MCF 10A (cell line): ENCODE measurements at regions of chr7 and their contacts with region 1.

Region 1: DNA sequence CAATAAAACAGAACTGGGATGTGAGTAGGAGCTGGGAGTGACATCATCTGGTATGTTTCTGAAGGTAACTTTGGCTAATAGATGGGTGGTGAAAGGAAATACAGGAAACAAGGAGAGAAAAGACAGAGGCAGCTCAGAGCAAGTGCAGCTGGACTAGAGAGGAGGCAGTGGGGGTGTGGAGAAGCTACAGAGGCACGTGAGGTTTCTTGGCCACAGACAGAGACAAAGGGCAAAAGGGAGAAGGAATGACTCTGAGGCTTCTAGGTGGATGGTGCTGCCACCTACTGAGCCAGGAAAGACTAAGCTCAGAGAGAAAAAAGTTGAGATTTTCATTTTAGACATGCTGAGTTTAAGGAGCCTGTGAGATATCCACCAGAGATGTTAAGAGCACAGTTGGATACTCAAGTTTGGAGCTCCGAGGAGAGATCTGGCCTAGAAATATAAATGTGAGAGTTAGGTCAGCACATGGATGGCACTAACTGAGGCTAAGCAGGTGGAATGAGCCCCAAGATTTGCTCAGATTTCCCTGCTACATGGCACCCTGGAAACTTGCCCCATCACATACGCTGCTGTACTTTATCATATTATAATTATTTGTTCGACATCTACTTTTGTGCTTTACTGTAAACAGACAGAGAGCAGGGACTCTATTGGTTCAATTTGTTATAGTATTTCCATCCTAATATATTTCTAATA is 293.0 kb upstream of the IMMP2L start:
- DNase-seq: peak; percentile 68
- H3K4me3 Mint-ChIP-seq: no peak overlapping the region
- H3K27ac Mint-ChIP-seq: no peak overlapping the region
- H3K4me1 Mint-ChIP-seq: peaks cover 9% of the 10 kb centered on the region
- H3K27me3 Mint-ChIP-seq: no peaks in the 10 kb centered on the region
- CTCF ChIP-seq: peak; percentile 43

Region 2: GRCh38 chr7:111752022-111752582 is 103.2 kb before region 1 on chr7:
- CTCF ChIA-PET with region 1: interaction called, 286 read pairs
- POLR2A ChIA-PET with region 1: interaction called, 5 read pairs
- intact Hi-C with region 1: loop called (anchors 1 kb)
- DNase-seq: peak; percentile 75
- H3K4me3 Mint-ChIP-seq: no peak overlapping the region
- H3K27ac Mint-ChIP-seq: no peak overlapping the region
- H3K4me1 Mint-ChIP-seq: peaks cover 6% of the 10 kb centered on the region
- H3K27me3 Mint-ChIP-seq: no peaks in the 10 kb centered on the region
- CTCF ChIP-seq: peak; percentile 81

Region 3: DNA sequence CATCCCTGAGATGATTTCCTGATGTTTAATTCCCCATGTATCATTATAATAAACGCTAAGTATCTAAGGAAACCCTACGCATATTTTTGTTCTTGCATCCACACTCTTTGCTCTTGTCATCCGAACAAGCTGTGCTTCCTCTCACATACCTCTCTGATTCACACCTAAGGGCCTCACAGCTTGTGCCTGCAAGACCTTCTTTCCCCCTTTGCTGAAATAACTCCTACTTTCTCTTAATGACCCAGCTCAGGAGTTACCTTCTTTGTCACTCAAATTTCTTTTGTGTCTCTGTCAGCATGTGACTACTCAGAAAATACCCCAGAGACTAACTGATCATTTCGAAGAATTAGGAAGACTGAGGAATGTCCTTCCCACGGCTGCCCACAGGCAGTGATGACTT is 83.7 kb before region 1 on chr7:
- CTCF ChIA-PET with region 1: interaction called, 43 read pairs
- POLR2A ChIA-PET with region 1: interaction called, 4 read pairs
- intact Hi-C with region 1: no loop called
- DNase-seq: no peak
- H3K4me3 Mint-ChIP-seq: no peak overlapping the region
- H3K27ac Mint-ChIP-seq: no peak overlapping the region
- H3K4me1 Mint-ChIP-seq: no peaks in the 10 kb centered on the region
- H3K27me3 Mint-ChIP-seq: no peaks in the 10 kb centered on the region
- CTCF ChIP-seq: no peak

Region 4: DNA sequence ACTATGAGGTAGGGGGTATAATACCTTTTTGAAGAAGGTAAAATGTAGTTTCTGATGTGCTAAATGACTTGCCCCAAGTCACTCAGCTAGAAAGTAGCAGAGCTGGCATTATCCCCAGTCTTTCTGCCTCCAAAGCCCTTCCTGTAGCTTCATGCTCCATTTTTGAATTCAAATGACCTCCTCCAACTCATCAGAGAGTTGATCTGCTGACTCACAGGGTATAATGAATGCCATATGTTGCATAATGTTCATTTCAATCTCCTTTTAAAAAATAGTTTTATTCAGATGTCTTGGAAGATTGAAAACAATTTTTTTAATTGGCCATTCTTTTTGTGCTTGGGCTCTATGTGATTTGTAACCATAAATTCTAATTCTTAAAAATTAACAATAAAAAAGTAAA is 20.2 kb before region 1 on chr7:
- CTCF ChIA-PET with region 1: interaction called, 24 read pairs
- POLR2A ChIA-PET with region 1: no interaction called
- intact Hi-C with region 1: no loop called
- DNase-seq: peak; percentile 66
- H3K4me3 Mint-ChIP-seq: no peak overlapping the region
- H3K27ac Mint-ChIP-seq: peak overlapping the region; percentile 14
- H3K4me1 Mint-ChIP-seq: peaks cover 17% of the 10 kb centered on the region
- H3K27me3 Mint-ChIP-seq: no peaks in the 10 kb centered on the region
- CTCF ChIP-seq: no peak

Region 5: GRCh38 chr7:111867348-111867931 is 12.1 kb after region 1 on chr7:
- CTCF ChIA-PET with region 1: interaction called, 38 read pairs
- POLR2A ChIA-PET with region 1: interaction called, 3 read pairs
- intact Hi-C with region 1: no loop called
- DNase-seq: no peak
- H3K4me3 Mint-ChIP-seq: no peak overlapping the region
- H3K27ac Mint-ChIP-seq: no peak overlapping the region
- H3K4me1 Mint-ChIP-seq: peaks cover 7% of the 10 kb centered on the region
- H3K27me3 Mint-ChIP-seq: no peaks in the 10 kb centered on the region
- CTCF ChIP-seq: no peak

Region 6: DNA sequence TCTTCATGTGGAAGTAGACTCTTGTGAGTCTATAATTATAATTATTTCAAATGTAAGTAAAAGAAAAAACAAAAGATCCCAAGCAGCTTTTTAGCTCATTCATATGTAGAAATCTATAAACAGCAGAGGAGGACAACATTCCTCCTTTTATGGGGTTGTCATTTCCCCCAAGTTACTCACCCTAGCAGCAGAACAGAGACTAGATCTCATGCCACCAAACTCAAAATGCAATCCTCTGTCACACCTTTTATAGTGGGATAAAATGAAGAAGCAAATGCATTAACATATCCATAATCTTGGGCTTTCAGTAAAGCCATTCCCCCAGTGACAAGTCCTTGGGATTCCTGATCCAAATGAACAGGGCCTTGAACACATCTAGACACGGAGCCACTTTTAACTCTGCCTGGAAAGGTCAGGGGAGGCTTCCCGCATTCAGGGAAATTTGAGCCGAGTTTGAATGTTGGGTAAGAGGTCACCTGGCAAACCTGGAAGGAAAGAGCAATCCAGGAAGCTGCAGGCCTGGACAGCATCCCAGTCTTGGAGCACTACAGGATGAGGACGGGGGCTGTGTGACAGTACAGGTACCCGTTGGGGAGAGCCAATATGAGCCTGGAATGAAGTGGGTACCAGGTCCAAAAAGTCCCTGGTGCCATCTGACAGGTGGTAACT is 274.5 kb after region 1 on chr7:
- CTCF ChIA-PET with region 1: no interaction called
- POLR2A ChIA-PET with region 1: no interaction called
- intact Hi-C with region 1: no loop called
- DNase-seq: peak; percentile 79
- H3K4me3 Mint-ChIP-seq: no peak overlapping the region
- H3K27ac Mint-ChIP-seq: peak overlapping the region; percentile 86
- H3K4me1 Mint-ChIP-seq: peaks cover 14% of the 10 kb centered on the region
- H3K27me3 Mint-ChIP-seq: no peaks in the 10 kb centered on the region
- CTCF ChIP-seq: no peak